Endothelial cell of umbilical vein (primary cell): ENCODE measurements at regions of chr10 and their contacts with region 1.

Region 1: GRCh38 chr10:102596506-102596971 is 47.7 kb upstream of the TRIM8 start:
- DNase-seq: peak; percentile 74
- H3K4me3 ChIP-seq: no peak overlapping the region
- H3K27ac ChIP-seq: peak overlapping the region; percentile 92
- H3K4me1 ChIP-seq: peaks cover 64% of the 10 kb centered on the region
- H3K27me3 ChIP-seq: no peaks in the 10 kb centered on the region
- CTCF ChIP-seq: peak; percentile 79
- POLR2A ChIP-seq: no peak

Region 2: DNA sequence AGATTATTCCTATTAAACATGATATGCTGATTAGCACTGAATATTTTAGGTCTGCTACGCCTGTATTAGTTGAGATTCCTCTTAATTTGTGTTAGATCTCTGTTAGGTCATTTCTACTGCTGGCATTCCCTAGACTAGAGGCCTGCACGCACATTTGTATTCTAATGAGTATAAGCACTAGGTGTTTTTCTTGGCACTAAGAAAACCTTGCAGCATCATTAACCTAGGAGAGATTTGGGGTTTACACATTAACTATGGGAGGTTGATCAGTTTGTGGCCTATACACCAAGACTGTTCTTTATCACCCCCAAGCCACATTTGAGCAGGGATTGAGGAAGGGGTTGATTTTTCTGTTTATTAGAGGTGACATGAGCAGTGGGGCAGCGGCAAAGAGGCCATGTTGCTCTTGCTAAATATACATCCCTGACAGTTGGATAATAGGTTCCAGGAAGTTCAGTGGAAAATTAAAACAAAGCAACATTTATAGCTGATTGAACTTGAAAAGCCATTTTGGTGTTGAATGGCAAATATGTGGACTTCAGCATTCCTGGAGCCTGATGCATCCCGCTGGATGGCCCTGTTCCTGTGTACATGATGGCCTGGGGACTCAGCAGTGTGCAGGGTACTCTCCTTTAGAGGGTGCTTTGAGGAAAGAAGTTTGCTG is 286.0 kb before region 1 on chr10:
- CTCF ChIA-PET with region 1: no interaction called
- POLR2A ChIA-PET with region 1: no interaction called
- dilution Hi-C with region 1: no loop called
- intact Hi-C with region 1: no loop called
- DNase-seq: peak; percentile 49
- H3K4me3 ChIP-seq: no peak overlapping the region
- H3K27ac ChIP-seq: peak overlapping the region; percentile 41
- H3K4me1 ChIP-seq: peaks cover 16% of the 10 kb centered on the region
- H3K27me3 ChIP-seq: no peaks in the 10 kb centered on the region
- CTCF ChIP-seq: no peak
- POLR2A ChIP-seq: no peak

Region 3: GRCh38 chr10:102503281-102504220 is 93.0 kb before region 1 on chr10 and contains the start of gene SUFU:
- CTCF ChIA-PET with region 1: interaction called, 10 read pairs
- POLR2A ChIA-PET with region 1: no interaction called
- dilution Hi-C with region 1: no loop called
- intact Hi-C with region 1: loop called (anchors 1 kb)
- DNase-seq: peak; percentile 99
- H3K4me3 ChIP-seq: peak within 1 kb of the TSS; percentile 68 to 87 (median 76)
- H3K27ac ChIP-seq: peak within 1 kb of the TSS; percentile 52
- H3K4me1 ChIP-seq: peaks cover 16% of the 10 kb centered on the region
- H3K27me3 ChIP-seq: no peaks in the 10 kb centered on the region
- CTCF ChIP-seq: peak; percentile 89 to 91
- POLR2A ChIP-seq: peak; percentile 86
- total RNA-seq, gene SUFU: 14.5 and 16.3 TPM in 2 replicates

Region 4: GRCh38 chr10:102615361-102615760 is 18.8 kb after region 1 on chr10:
- CTCF ChIA-PET with region 1: interaction called, 23 read pairs
- POLR2A ChIA-PET with region 1: interaction called, 4 read pairs
- dilution Hi-C with region 1: no loop called
- intact Hi-C with region 1: loop called (anchors 1 kb)
- DNase-seq: peak; percentile 29
- H3K4me3 ChIP-seq: no peak overlapping the region
- H3K27ac ChIP-seq: no peak overlapping the region
- H3K4me1 ChIP-seq: peaks cover 52% of the 10 kb centered on the region
- H3K27me3 ChIP-seq: no peaks in the 10 kb centered on the region
- CTCF ChIP-seq: peak; percentile 32 to 65
- POLR2A ChIP-seq: no peak

Region 5: DNA sequence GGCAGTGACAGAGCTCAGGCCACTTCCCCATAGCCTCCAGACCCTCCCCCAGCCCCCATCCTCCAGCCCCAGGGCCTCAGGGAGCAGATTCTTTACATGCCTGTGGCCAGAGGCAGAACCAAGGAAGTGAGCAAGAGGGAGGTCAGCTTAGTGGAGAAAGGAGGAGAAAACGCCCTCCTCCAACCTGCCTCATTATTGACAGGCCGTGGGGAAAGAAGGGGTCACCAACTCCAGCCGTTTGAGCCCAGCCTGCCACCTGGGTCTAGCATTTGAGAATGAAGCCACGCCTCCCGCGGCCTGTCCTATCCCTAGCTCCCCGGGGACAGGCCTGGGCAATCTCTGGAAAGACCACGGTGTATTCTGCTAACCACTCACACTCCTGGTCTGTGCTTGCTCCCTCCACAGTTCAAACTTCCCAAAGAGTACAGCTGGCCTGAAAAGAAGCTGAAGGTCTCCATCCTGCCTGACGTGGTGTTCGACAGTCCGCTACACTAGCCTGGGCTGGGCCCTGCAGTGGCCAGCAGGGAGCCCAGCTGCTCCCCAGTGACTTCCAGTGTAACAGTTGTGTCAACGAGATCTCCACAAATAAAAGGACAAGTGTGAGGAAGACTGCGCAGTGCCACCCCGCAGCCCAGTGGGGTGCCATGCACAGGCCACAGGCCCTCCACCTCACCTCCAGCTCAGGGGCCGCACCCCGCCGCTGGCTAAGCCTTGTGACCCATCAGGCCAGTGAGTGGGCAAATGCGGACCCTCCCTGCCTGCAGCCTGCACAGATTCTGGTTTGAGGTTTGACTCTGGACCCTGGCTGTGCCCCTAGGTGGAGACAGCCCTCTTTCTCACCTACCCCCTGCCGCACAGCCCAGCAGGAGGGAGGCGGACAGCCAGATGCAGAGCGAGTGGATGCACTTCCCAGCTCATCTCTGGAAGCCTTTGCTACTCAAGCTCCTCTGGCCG is 33.4 kb after region 1 on chr10:
- CTCF ChIA-PET with region 1: interaction called, 24 read pairs
- POLR2A ChIA-PET with region 1: interaction called, 5 read pairs
- dilution Hi-C with region 1: no loop called
- intact Hi-C with region 1: loop called (anchors 1 kb)
- DNase-seq: peak; percentile 50
- H3K4me3 ChIP-seq: no peak overlapping the region
- H3K27ac ChIP-seq: peak overlapping the region; percentile 97
- H3K4me1 ChIP-seq: peaks cover 73% of the 10 kb centered on the region
- H3K27me3 ChIP-seq: no peaks in the 10 kb centered on the region
- CTCF ChIP-seq: no peak
- POLR2A ChIP-seq: peak; percentile 47

Region 6: DNA sequence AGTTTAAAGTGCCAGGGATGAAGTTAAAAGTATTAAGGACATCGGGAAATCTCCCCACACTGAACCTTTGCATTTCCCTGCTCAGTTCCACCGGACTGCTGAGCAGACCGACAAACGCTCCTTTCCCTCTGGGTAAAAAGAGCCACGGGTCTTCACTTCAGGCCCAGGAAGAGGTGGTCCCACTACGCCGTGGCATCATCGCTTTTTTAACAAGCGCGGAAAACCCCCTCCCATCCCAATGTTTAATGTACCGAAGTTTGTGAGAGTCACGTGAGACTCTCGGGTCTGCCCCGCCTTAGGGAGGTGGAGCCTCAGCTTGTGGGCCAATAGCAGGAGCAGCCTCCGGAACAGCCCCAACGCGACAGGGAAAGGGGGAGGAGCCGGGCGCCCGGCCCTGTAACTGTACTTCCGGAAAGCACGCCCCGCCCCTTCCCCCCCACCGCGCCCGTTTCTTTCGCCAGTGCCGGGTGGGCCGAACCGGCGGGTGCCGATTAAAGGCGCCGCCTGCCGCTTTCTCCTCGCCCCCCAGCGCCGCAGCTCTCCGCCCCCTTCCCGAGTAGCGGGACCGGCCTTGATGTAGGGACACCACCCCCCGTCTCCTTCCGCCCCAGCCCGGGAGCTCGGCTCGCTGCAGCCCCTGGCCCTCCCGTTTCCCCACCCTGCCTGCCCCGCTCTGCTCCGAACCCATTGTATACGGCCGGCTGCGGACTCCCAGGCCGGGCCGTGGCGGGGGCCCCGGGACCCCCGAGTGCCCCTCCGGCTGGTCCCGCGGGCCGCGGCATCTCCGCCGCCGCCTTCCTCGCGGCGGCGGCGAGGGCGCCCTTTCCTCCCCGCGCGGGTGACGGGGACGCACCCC is 45.6 kb after region 1 on chr10:
- CTCF ChIA-PET with region 1: interaction called, 110 read pairs
- POLR2A ChIA-PET with region 1: interaction called, 8 read pairs
- dilution Hi-C with region 1: no loop called
- intact Hi-C with region 1: loop called (anchors 1 kb)
- DNase-seq: peak; percentile 98
- H3K4me3 ChIP-seq: peak overlapping the region; percentile 56 to 86 (median 69)
- H3K27ac ChIP-seq: peak overlapping the region; percentile 86
- H3K4me1 ChIP-seq: peaks cover 12% of the 10 kb centered on the region
- H3K27me3 ChIP-seq: no peaks in the 10 kb centered on the region
- CTCF ChIP-seq: no peak
- POLR2A ChIP-seq: peak; percentile 73

Region 7: DNA sequence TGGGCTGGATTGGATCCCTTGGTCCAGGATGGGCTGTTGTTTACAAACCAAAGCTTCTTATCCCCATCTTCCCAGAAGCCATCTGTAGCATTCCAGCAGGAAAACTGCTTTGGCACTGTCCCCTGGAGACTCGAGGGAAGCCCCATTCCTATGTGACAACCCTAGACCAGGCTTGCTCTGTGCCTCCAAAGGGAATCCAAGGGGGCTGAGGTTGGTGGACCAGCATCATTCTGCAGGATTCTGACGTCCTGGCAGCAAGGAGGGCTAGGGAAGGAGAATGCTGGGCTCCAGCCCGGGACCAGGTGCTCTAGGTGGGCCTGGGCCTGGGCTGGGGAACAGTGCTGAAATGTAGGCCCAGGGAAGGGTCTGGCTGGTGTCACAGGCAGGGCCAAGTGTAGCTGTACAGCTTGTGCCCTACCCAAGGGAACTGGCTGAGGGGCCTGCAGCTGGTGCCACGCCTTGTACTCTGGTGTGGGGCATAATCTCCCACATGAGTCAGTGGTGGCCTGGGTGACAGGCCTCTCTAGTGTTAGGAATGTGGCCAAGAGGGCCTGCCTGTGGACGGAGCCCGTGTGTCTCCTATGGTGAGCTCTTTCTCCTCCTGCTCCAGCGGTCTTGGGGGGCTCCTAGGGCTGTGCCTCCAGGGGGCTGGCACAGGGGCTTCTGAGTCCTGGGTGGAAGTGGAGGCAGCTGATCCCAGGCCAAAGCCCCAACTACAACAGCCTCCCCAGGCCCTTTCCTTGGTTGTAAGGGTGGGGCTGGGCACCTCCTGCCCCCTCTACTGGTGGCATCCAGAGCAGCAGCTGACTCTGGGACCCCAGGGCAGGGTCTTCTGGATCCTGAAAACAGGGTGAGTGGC is 72.9 kb after region 1 on chr10:
- CTCF ChIA-PET with region 1: interaction called, 13 read pairs
- POLR2A ChIA-PET with region 1: no interaction called
- dilution Hi-C with region 1: no loop called
- intact Hi-C with region 1: no loop called
- DNase-seq: no peak
- H3K4me3 ChIP-seq: no peak overlapping the region
- H3K27ac ChIP-seq: no peak overlapping the region
- H3K4me1 ChIP-seq: peaks cover 5% of the 10 kb centered on the region
- H3K27me3 ChIP-seq: no peaks in the 10 kb centered on the region
- CTCF ChIP-seq: peak; percentile 17 to 51
- POLR2A ChIP-seq: no peak

Region 8: GRCh38 chr10:102713814-102714620 is 117.5 kb after region 1 on chr10 and contains the start of gene ARL3:
- CTCF ChIA-PET with region 1: interaction called, 3 read pairs
- POLR2A ChIA-PET with region 1: no interaction called
- dilution Hi-C with region 1: no loop called
- intact Hi-C with region 1: loop called (anchors 5 kb)
- DNase-seq: peak; percentile 99
- H3K4me3 ChIP-seq: peak within 1 kb of the TSS; percentile 64 to 85 (median 85)
- H3K27ac ChIP-seq: peak within 1 kb of the TSS; percentile 38
- H3K4me1 ChIP-seq: peaks cover 23% of the 10 kb centered on the region
- H3K27me3 ChIP-seq: no peaks in the 10 kb centered on the region
- CTCF ChIP-seq: peak; percentile 39 to 78
- POLR2A ChIP-seq: peak; percentile 76
- total RNA-seq, gene ARL3: 10.6 and 11.0 TPM in 2 replicates

Region 9: GRCh38 chr10:104353325-104354048 is 1756.9 kb after region 1 on chr10 and contains the start of gene CFAP58:
- CTCF ChIA-PET with region 1: no interaction called
- POLR2A ChIA-PET with region 1: no interaction called
- dilution Hi-C with region 1: no loop called
- intact Hi-C with region 1: no loop called
- DNase-seq: peak; percentile 88
- H3K4me3 ChIP-seq: peak within 1 kb of the TSS; percentile 38 to 66 (median 42)
- H3K27ac ChIP-seq: no peak within 1 kb of the TSS
- H3K4me1 ChIP-seq: peaks cover 13% of the 10 kb centered on the region
- H3K27me3 ChIP-seq: peaks cover 0 to 5% of the 10 kb centered on the region in 2 experiments
- CTCF ChIP-seq: peak; percentile 66 to 75
- POLR2A ChIP-seq: no peak
- total RNA-seq, gene CFAP58: 0.29 and 0.35 TPM in 2 replicates